ENCODE measurements at regions of chr12 and their contacts with region 1.

Region 1: DNA sequence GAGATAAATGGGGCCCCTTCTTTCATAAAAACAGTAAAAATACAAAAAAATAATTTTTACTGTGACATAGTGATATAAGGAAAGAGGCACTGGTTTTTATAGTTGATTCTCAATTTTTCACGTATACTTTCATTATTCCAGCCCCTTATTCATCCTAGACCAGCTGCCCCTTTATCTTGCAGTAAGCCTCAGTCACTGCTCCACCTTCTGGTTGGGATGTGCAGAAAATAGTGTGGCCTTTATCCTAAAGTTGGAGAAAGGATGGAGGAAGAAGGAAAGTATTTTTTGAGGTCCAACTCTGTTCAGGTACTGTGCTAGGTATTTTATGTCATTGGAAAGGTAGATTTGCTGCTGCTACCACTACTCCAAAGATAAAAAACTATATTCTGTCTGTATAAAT is 172.7 kb downstream of the ANO6 start:
- DNase-seq: peak in 1 of 6 donors; percentile 24
- ATAC-seq: peak in 3 of 4 donors; percentile 64 to 75 (median 69)
- H3K4me3 ChIP-seq: no peak overlapping the region
- H3K27ac ChIP-seq: no peak overlapping the region
- H3K4me1 ChIP-seq: no peaks in the 10 kb centered on the region
- H3K27me3 ChIP-seq: no peaks in the 10 kb centered on the region
- CTCF ChIP-seq: peak in 2 of 4 donors; percentile 15 to 21

Region 2: GRCh38 chr12:45215419-45216229 is 172.9 kb before region 1 on chr12 and contains the start of gene ANO6:
- intact Hi-C with region 1: loop called in 1 of 3 experiments (anchors 10 kb)
- DNase-seq: peak; percentile 81 to 93 (median 86)
- ATAC-seq: peak; percentile 84 to 94 (median 92)
- H3K4me3 ChIP-seq: peak within 1 kb of the TSS; percentile 79 to 97 (median 85)
- H3K27ac ChIP-seq: peak within 1 kb of the TSS; percentile 81 to 98 (median 92)
- H3K4me1 ChIP-seq: peaks cover 10 to 14% (median 13%) of the 10 kb centered on the region in 3 donors
- H3K27me3 ChIP-seq: no peaks in the 10 kb centered on the region
- CTCF ChIP-seq: no peak
- total RNA-seq, gene ANO6: 14.4 to 34.0 (median 22.6) TPM

Measured in pancreas (tissue), 10 donors.